A549 (cell line): ENCODE measurements at regions of chr19 and their contacts with region 1.

Region 1: DNA sequence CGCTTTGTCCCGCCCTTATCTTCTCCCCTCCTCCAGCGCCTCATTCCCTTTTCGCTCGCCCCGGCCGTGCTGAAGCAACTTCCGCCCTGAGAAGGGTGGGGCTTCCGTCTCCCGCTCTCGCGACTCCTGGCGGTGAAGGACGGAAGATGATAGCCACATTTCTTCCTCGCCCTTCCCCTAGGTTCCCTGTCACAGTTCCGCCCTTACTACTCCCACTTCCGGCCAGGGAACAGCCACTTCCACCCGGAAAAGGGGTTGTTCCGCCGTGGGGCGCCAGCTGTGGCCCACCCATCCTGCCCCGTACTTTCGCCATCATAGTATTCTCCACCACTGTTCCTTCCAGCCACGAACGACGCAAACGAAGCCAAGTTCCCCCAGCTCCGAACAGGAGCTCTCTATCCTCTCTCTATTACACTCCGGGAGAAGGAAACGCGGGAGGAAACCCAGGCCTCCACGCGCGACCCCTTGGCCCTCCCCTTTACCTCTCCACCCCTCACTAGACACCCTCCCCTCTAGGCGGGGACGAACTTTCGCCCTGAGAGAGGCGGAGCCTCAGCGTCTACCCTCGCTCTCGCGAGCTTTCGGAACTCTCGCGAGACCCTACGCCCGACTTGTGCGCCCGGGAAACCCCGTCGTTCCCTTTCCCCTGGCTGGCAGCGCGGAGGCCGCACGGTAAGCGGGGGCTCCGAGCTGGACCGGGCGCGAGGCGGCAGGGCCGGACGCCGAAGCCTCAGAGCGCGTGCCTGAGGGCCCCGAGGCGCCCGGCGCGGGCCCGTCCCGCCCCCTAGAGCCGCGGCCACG is at the start of gene RPS19:
- DNase-seq: peak; percentile 100
- ATAC-seq: peak; percentile 86 to 92
- H3K4me3 ChIP-seq: peak within 1 kb of the TSS; percentile 89
- H3K27ac ChIP-seq: peak within 1 kb of the TSS; percentile 90 to 95
- H3K4me1 ChIP-seq: peaks cover 40% of the 10 kb centered on the region
- CTCF ChIP-seq: peak; percentile 56
- EP300 ChIP-seq: peak in 1 of 2 experiments; percentile 13; a peak in 1 of 5 replicates
- POLR2A ChIP-seq: peak; percentile 95
- RAD21 ChIP-seq: no peak; a peak in 1 of 5 replicates
- polyA plus RNA-seq, gene RPS19: 2,749 and 3,564 TPM in 2 replicates

Region 2: DNA sequence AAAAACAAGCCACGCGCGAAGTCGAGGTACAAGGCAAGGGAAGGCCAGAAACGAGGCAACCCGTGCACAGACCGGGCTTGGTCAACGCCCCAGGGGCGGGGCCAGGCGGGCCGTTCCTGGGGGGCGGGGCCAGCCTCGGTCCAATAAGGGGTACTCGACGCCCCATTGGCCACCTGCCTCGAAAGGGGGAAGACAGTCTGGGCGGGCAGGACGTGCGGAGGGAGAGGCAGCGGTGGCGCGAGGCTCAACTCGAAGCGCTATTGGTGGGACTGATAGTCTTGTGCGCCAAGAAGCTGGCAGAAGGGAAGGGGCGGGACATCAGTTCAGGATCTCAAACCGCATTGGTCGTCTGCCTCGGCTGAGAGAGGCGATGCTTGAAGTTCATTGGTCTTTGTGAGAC is 15.2 kb before region 1 on chr19 and contains the start of gene LYPD4:
- CTCF ChIA-PET with region 1: interaction called, 243 read pairs
- POLR2A ChIA-PET with region 1: interaction called, 17 read pairs
- DNase-seq: peak in 1 of 2 experiments; percentile 58
- ATAC-seq: peak; percentile 20 to 68; a peak in 4 of 6 replicates
- H3K4me3 ChIP-seq: no peak within 1 kb of the TSS
- H3K27ac ChIP-seq: no peak within 1 kb of the TSS
- H3K4me1 ChIP-seq: no peaks in the 10 kb centered on the region
- CTCF ChIP-seq: no peak
- EP300 ChIP-seq: no peak
- POLR2A ChIP-seq: no peak
- RAD21 ChIP-seq: no peak
- polyA plus RNA-seq, gene LYPD4: not detected in 2 replicates

Region 3: GRCh38 chr19:42051166-42052118 is 191.6 kb after region 1 on chr19:
- CTCF ChIA-PET with region 1: no interaction called
- POLR2A ChIA-PET with region 1: no interaction called
- DNase-seq: no peak
- ATAC-seq: peak; percentile 6 to 21
- H3K4me3 ChIP-seq: no peak overlapping the region
- H3K27ac ChIP-seq: no peak overlapping the region
- H3K4me1 ChIP-seq: peaks cover 14% of the 10 kb centered on the region; the same call in 1 of the 3 replicates
- CTCF ChIP-seq: no peak
- EP300 ChIP-seq: no peak
- POLR2A ChIP-seq: no peak
- RAD21 ChIP-seq: no peak